ENCODE measurements at regions of chr7 and their contacts with region 1.

Region 1: DNA sequence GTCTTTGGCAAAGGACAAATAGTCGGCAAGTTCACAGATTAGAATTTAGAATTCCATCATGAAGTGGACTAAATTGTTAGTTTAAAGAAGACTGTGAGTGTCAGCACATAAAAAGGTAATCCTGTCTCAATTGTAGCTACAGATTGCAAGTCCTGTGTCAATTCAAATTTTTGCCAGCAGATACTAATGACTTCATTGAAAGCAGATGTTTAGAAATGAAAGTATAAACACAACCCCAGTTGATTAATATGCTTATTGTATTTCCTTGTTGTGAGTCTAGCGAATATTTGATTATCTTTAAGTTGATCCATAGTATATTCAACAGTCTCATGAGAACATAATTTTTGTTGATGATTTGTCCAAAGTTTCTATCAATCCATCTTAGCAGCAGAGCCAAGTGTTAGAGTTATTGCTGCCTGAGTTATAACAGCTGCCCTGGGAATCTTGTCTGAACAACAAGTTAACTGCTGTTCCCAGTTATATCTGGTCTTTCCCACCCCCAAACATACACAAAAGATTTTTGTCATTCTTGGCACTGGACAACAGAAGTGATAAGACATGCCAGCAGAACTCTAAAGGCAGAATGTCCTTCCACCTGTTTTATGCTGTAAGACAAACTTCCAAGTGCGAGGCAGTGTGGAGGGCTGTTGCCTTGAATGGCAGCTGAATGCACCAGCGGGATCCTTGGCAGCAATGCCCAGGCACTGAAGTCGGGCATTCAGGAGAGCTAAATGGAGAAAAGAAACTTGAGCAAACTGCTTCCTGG is 21.3 kb upstream of the HERPUD2 start:
- DNase-seq: no peak
- ATAC-seq: no peak
- H3K4me3 ChIP-seq: no peak overlapping the region
- H3K27ac ChIP-seq: no peak overlapping the region
- H3K4me1 ChIP-seq: peaks cover 7% of the 10 kb centered on the region
- H3K27me3 ChIP-seq: no peaks in the 10 kb centered on the region
- CTCF ChIP-seq: no peak
- EP300 ChIP-seq: no peak
- POLR2A ChIP-seq: no peak
- RAD21 ChIP-seq: no peak

Region 2: GRCh38 chr7:35465791-35466336 is 250.4 kb before region 1 on chr7:
- CTCF ChIA-PET with region 1: no interaction called
- POLR2A ChIA-PET with region 1: no interaction called
- RAD21 ChIA-PET with region 1: no interaction called
- SMC1A ChIA-PET with region 1: no interaction called
- in situ Hi-C with region 1: no loop called
- intact Hi-C with region 1: no loop called
- DNase-seq: no peak
- ATAC-seq: no peak
- H3K4me3 ChIP-seq: no peak overlapping the region
- H3K27ac ChIP-seq: no peak overlapping the region
- H3K4me1 ChIP-seq: no peaks in the 10 kb centered on the region
- H3K27me3 ChIP-seq: no peaks in the 10 kb centered on the region
- CTCF ChIP-seq: no peak
- EP300 ChIP-seq: no peak
- POLR2A ChIP-seq: no peak
- RAD21 ChIP-seq: no peak

Region 3: DNA sequence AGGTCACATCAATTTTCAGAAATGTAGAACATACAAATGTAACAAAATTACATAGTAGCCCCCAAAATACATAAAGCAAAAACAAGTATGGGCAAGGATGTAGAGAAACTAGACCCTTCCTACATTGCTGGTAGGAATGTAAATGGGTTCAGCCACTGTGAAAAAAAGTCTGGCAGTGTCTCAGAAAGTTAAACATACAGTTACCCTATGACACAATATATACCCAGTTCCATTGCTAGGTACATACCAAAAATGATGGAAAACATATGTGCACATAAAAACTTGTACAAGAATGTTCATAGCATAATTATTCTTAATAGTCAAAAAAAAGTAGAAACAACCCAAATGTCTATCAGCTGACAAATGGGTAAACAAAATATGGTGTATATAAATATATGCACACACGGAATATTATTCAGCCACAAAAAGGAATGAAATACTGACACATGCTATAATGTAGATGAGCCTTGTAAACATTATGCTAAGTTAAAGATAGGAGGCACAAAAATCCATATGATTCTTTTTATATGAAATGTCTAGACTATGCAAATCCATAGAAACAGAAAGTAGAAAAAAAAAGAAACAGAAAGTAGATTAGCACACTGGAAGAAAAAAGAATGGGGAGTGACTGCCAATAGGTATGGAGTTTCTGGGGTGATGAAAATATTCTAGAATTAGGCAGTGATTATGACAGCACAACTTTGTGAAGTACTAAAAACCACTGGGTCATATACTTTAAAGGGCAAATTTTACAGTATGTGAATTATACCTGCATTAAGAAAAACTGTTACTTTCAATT is 34.8 kb before region 1 on chr7:
- CTCF ChIA-PET with region 1: no interaction called
- POLR2A ChIA-PET with region 1: no interaction called
- RAD21 ChIA-PET with region 1: no interaction called
- SMC1A ChIA-PET with region 1: no interaction called
- in situ Hi-C with region 1: no loop called
- intact Hi-C with region 1: no loop called
- DNase-seq: no peak
- ATAC-seq: peak; percentile 83
- H3K4me3 ChIP-seq: no peak overlapping the region
- H3K27ac ChIP-seq: no peak overlapping the region
- H3K4me1 ChIP-seq: peaks cover 8% of the 10 kb centered on the region; the same call in 1 of the 2 replicates
- H3K27me3 ChIP-seq: no peaks in the 10 kb centered on the region
- CTCF ChIP-seq: no peak
- EP300 ChIP-seq: no peak
- POLR2A ChIP-seq: no peak
- RAD21 ChIP-seq: no peak

Region 4: DNA sequence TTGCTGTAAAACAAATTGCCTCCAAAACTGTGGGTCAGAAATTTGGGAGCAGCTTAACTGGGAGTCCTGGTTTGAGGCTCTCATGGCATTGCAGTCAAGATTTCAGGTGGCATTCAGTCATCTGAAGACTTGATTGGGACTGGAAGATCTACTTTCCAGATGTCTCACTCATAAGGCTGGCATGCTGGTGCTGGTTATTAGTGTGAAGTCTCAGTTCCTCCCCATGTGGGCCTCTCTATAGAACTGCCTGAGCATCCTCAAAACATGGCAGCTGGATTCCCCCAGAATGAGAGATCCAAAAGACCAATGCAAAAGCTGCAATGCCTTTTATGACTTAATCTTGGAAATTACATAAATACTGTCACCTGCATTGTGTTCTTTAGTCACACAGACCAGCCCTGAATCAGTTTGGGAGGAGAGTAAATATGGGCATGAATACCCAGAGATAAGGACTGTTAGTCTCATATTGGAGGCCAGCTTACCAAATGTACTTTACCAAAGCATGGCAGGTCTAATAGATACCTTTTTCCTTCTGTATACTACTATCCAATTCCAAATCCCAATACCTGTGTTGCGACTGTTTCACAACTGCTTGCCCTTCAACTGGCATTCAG is 14.8 kb before region 1 on chr7:
- CTCF ChIA-PET with region 1: interaction called, 26 read pairs
- POLR2A ChIA-PET with region 1: interaction called, 3 read pairs
- RAD21 ChIA-PET with region 1: interaction called, 3 read pairs
- SMC1A ChIA-PET with region 1: interaction called, 337 read pairs
- in situ Hi-C with region 1: no loop called
- intact Hi-C with region 1: no loop called
- DNase-seq: no peak
- ATAC-seq: peak; percentile 92
- H3K4me3 ChIP-seq: no peak overlapping the region
- H3K27ac ChIP-seq: no peak overlapping the region
- H3K4me1 ChIP-seq: no peaks in the 10 kb centered on the region
- H3K27me3 ChIP-seq: no peaks in the 10 kb centered on the region
- CTCF ChIP-seq: no peak
- EP300 ChIP-seq: no peak
- POLR2A ChIP-seq: no peak
- RAD21 ChIP-seq: no peak

Region 5: DNA sequence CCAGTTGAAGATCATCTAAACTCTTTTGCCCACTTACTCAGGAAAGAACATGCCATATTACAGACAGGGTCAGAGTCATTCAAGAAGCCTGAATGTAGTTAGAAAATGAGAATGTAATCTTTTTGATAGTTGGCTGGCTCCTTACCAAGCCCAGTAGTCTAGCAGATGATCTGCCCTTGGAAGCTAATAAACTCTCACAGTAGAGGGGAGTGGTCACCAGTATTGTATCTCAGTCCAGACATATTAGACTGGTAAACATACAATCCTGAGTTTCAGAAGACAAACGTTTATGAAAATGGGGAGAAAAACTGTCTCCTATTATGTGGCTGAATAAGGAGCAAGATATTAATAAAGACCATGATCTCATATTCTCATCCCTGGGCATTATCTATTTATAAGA is 150.0 kb after region 1 on chr7:
- CTCF ChIA-PET with region 1: no interaction called
- POLR2A ChIA-PET with region 1: no interaction called
- RAD21 ChIA-PET with region 1: no interaction called
- SMC1A ChIA-PET with region 1: no interaction called
- in situ Hi-C with region 1: no loop called
- intact Hi-C with region 1: no loop called
- DNase-seq: no peak
- ATAC-seq: no peak
- H3K4me3 ChIP-seq: no peak overlapping the region
- H3K27ac ChIP-seq: no peak overlapping the region
- H3K4me1 ChIP-seq: peaks cover 7% of the 10 kb centered on the region; the same call in 1 of the 2 replicates
- H3K27me3 ChIP-seq: no peaks in the 10 kb centered on the region
- CTCF ChIP-seq: no peak
- EP300 ChIP-seq: no peak
- POLR2A ChIP-seq: no peak
- RAD21 ChIP-seq: no peak